ENCODE measurements at regions of chr4 and their contacts with region 1.

Region 1: GRCh38 chr4:53816561-53816960 is 225.3 kb upstream of the LNX1 start:
- DNase-seq: peak; percentile 25
- ATAC-seq: peak; percentile 85
- H3K4me3 ChIP-seq: no peak overlapping the region
- H3K27ac ChIP-seq: peak overlapping the region; percentile 56; the same call in 1 of the 2 replicates
- H3K4me1 ChIP-seq: peaks cover 18% of the 10 kb centered on the region
- H3K27me3 ChIP-seq: no peaks in the 10 kb centered on the region
- CTCF ChIP-seq: no peak
- POLR2A ChIP-seq: no peak
- RAD21 ChIP-seq: no peak

Region 2: GRCh38 chr4:53854991-53855568 is 38.5 kb after region 1 on chr4:
- CTCF ChIA-PET with region 1: no interaction called
- POLR2A ChIA-PET with region 1: no interaction called
- dilution Hi-C with region 1: no loop called
- in situ Hi-C with region 1: no loop called
- intact Hi-C with region 1: loop called (anchors 5 kb)
- DNase-seq: peak; percentile 60
- ATAC-seq: peak; percentile 12
- H3K4me3 ChIP-seq: no peak overlapping the region
- H3K27ac ChIP-seq: peak overlapping the region; percentile 72
- H3K4me1 ChIP-seq: peaks cover 27% of the 10 kb centered on the region
- H3K27me3 ChIP-seq: no peaks in the 10 kb centered on the region
- CTCF ChIP-seq: no peak
- POLR2A ChIP-seq: no peak
- RAD21 ChIP-seq: no peak